ENCODE measurements at regions of chrX and their contacts with region 1.

Region 1: GRCh38 chrX:41333744-41334259 is at the start of gene DDX3X:
- DNase-seq: peak; percentile 88 to 96 (median 93)
- H3K4me3 ChIP-seq: peak within 1 kb of the TSS; percentile 51 to 100 (median 97)
- H3K27ac ChIP-seq: peak within 1 kb of the TSS; percentile 98 to 100 (median 100)
- H3K27me3 ChIP-seq: no peaks in the 10 kb centered on the region
- CTCF ChIP-seq: peak in 21 of 56 donors; percentile 5 to 50 (median 22)
- total RNA-seq, gene DDX3X: 125 to 336 (median 218) TPM

Region 2: DNA sequence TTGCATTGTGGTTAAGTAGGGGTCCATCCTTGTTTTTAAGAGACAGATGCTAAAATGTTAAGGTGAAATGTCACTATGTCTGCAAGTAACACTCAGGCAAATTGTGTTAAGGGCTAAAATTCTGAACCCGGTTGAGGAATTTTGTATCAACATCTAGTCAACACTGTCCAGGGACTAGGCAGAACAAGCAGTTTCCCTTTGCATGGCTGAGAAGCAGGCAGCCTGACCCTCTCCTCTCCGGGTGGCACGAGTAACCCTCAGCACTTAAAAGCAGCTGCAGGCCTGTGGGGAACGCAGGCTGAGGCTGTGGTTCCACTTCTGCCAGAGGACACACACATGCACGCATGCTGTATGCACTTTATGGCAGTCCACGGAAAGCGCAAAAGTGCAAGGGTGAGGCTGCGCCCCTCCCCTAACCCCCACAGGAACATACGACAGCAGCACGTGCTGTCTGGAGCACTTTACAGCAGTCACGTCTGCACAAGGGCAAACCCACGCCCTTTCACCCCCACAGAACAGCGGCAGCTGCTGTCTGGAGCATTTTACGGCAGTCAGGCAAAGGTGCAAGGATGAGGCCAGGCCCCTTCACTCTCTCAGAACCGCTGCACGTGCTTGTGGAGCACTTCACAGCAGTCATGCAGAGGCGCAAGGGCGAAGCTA is 711.2 kb before region 1 on chrX:
- intact Hi-C with region 1: no loop called
- DNase-seq: no peak
- H3K4me3 ChIP-seq: no peak overlapping the region
- H3K27ac ChIP-seq: no peak overlapping the region
- H3K27me3 ChIP-seq: peaks cover 0 to 66% (median 6%) of the 10 kb centered on the region in 45 donors
- CTCF ChIP-seq: no peak

Region 3: GRCh38 chrX:41084044-41084892 is 249.5 kb before region 1 on chrX:
- intact Hi-C with region 1: loop called (anchors 5 kb)
- DNase-seq: peak; percentile 93 to 96 (median 94)
- H3K4me3 ChIP-seq: peak overlapping the region; percentile 45 to 99 (median 93)
- H3K27ac ChIP-seq: peak overlapping the region; percentile 92 to 99 (median 98)
- H3K27me3 ChIP-seq: peaks cover 0 to 8% (median 0%) of the 10 kb centered on the region in 45 donors
- CTCF ChIP-seq: peak in 15 of 56 donors; percentile 5 to 35 (median 16)

Region 4: GRCh38 chrX:41275661-41276609 is 57.9 kb before region 1 on chrX:
- intact Hi-C with region 1: loop called in 1 of 2 experiments (anchors 5 kb)
- DNase-seq: peak; percentile 33 to 74 (median 53)
- H3K4me3 ChIP-seq: peak overlapping the region; percentile 30 to 76 (median 59)
- H3K27ac ChIP-seq: peak overlapping the region in 52 of 59 donors; percentile 1 to 88 (median 71)
- H3K27me3 ChIP-seq: peaks cover 0 to 70% (median 7%) of the 10 kb centered on the region in 45 donors
- CTCF ChIP-seq: peak in 53 of 56 donors; percentile 19 to 70 (median 46)

Region 5: DNA sequence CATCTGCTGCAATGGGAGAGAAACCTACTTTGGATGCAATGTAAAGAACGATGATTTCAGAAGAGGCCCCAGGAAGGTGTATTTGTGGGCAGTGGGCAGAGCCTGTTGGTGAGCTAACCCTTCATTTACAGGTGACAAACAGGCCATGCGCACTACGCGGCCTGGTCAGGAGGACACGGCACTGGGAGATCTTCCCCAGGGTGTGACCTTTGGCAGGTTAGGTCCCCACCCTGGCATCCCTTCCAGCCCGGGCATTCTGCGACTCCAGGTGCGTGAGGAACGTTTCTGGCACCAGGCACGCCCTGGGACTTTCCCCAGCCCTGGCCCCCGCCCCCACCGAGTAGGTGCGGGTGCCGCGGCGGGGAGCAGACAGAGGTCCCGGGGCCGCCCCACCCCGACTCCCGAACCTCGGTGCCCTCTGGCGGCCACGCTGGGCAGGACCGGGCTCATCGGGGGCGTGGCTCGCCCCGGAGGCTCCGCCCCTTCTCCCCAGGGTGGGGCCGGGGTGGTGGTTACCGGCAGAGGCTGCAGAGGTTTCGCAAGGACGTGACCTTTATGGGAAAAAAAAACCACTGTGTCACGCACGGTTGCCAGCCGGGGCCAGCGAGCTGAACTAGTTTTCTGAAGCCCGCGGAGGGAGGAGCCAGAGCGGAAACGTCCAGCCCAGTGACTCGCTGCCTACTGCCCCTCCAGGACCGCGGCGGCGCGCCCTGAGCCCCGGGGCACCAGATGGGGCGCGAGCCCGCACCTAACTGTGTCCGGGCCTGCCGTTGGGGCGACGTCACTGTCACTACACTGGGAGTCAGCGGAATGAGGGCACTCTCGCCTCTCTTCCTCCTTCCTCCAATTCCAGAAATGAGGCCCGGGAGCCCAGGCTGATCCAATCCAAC is 108.4 kb after region 1 on chrX:
- intact Hi-C with region 1: loop called in 1 of 2 experiments (anchors 10 kb)
- DNase-seq: peak; percentile 11 to 76 (median 50)
- H3K4me3 ChIP-seq: peak overlapping the region in 58 of 59 donors; percentile 16 to 69 (median 48)
- H3K27ac ChIP-seq: peak overlapping the region in 44 of 59 donors; percentile 2 to 83 (median 51)
- H3K27me3 ChIP-seq: peaks cover 0 to 57% (median 11%) of the 10 kb centered on the region in 45 donors
- CTCF ChIP-seq: peak in 52 of 56 donors; percentile 15 to 68 (median 56)

Region 6: GRCh38 chrX:41512394-41512793 is 178.6 kb after region 1 on chrX:
- intact Hi-C with region 1: loop called (anchors 10 kb)
- DNase-seq: no peak
- H3K4me3 ChIP-seq: no peak overlapping the region
- H3K27ac ChIP-seq: no peak overlapping the region
- H3K27me3 ChIP-seq: peaks cover 0 to 54% (median 9%) of the 10 kb centered on the region in 45 donors
- CTCF ChIP-seq: no peak

Measured in dorsolateral prefrontal cortex (tissue), 120 donors.